ENCODE measurements at regions of chr20 and their contacts with region 1.

Region 1: GRCh38 chr20:54649511-54649962 is 174.1 kb downstream of the DOK5 start:
- DNase-seq: peak; percentile 92
- H3K4me3 ChIP-seq: no peak overlapping the region
- H3K27ac ChIP-seq: no peak overlapping the region
- H3K4me1 ChIP-seq: no peaks in the 10 kb centered on the region
- H3K27me3 ChIP-seq: no peaks in the 10 kb centered on the region
- CTCF ChIP-seq: peak in 2 of 3 experiments; percentile 69 to 86
- POLR2A ChIP-seq: no peak

Region 2: DNA sequence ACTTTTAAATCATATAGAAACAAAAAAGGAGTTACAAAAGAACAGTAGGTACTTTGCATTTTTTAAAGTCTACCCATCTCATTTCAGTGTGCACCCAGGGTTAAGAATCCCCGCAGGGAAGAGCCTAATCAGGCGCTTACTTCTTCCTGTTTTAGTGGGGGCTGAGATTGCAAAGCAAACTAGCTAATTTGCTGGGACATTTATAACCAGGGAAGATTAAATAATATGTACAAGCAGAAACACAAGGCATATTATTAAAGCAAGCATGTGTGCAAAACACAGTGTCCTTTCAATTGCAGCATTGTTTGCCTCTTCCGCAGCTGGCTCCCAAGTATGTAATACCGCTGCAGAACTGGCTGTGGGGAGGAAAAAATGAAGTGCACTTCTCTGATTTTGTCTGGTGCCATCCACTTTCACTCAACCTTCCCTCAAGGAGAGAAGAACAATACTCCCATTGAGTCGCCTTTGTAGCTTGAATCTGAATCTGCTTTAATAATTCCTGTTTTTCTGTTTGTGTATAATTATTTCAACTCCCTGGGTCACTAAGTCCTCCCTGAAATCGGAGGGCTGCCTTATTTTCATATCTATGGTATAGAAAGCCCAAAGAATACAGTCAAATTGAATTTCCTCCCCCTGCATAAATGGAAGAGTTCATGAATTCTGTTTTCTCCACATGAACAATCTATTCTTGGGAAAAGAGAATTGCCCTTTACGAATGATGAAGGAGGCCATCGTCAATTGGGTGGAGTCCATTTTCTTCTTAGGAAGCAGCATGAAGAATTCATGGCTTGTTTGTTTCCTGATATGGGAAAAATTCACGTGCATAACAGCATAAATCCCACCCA is 555.9 kb before region 1 on chr20:
- intact Hi-C with region 1: loop called (anchors 10 kb)
- DNase-seq: no peak
- H3K4me3 ChIP-seq: no peak overlapping the region
- H3K27ac ChIP-seq: no peak overlapping the region
- H3K4me1 ChIP-seq: no peaks in the 10 kb centered on the region
- H3K27me3 ChIP-seq: no peaks in the 10 kb centered on the region
- CTCF ChIP-seq: no peak
- POLR2A ChIP-seq: no peak

Region 3: GRCh38 chr20:54219751-54220426 is 429.6 kb before region 1 on chr20:
- intact Hi-C with region 1: loop called (anchors 10 kb)
- DNase-seq: no peak
- H3K4me3 ChIP-seq: no peak overlapping the region
- H3K27ac ChIP-seq: no peak overlapping the region
- H3K4me1 ChIP-seq: peaks cover 10% of the 10 kb centered on the region
- H3K27me3 ChIP-seq: no peaks in the 10 kb centered on the region
- CTCF ChIP-seq: peak in 1 of 3 experiments; percentile 45
- POLR2A ChIP-seq: no peak

Region 4: DNA sequence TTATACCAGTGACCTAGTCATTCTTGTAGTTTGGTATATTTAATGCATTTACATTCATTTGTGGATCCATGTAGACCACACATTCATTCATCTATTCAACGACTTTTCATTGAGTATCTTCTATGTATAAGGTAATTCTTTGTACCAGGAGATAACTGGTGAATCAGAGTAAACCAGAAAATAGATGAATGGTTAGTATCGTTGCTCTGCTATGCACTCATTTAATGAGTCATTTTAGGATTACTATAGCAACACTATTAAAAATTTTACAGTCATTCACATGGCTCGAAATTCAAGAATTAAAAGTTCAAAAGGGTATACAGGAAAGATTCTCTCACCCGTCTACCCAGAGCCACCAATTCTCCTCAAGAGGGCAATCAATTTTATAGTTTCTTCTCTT is 147.4 kb before region 1 on chr20:
- intact Hi-C with region 1: no loop called
- DNase-seq: no peak
- H3K4me3 ChIP-seq: no peak overlapping the region
- H3K27ac ChIP-seq: no peak overlapping the region
- H3K4me1 ChIP-seq: no peaks in the 10 kb centered on the region
- H3K27me3 ChIP-seq: no peaks in the 10 kb centered on the region
- CTCF ChIP-seq: no peak
- POLR2A ChIP-seq: no peak

Region 5: DNA sequence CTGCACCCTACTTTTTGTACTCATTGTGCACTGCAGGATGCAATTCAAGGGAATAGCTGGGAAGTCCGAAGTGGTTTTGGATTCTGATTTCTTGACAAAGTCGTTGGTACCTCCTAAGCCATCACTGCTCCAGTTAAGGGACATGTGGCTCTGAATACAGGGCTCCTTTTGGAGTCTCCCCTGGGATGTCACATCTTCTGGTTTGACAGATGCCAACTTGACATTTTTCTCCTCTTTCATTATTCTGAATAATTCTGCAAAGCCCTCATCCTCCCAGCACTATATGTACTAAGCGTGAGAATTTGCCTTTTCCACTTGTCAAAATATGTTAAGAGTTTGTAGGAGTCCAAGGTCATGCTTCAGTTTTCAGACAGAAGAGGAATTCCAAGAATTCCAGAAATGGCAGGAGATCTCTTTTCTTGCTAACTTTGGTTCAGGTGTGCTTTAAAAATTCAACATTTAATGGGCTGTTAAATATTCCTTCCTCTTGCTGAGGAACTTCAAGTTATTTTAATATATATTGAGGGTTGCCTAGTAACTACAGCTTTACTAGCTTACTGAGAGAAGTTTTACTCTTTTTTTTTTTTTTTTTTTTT is 135.4 kb before region 1 on chr20:
- intact Hi-C with region 1: no loop called
- DNase-seq: no peak
- H3K4me3 ChIP-seq: no peak overlapping the region
- H3K27ac ChIP-seq: no peak overlapping the region
- H3K4me1 ChIP-seq: no peaks in the 10 kb centered on the region
- H3K27me3 ChIP-seq: no peaks in the 10 kb centered on the region
- CTCF ChIP-seq: no peak
- POLR2A ChIP-seq: no peak

Region 6: GRCh38 chr20:54566031-54566885 is 83.3 kb before region 1 on chr20:
- intact Hi-C with region 1: no loop called
- DNase-seq: no peak
- H3K4me3 ChIP-seq: no peak overlapping the region
- H3K27ac ChIP-seq: no peak overlapping the region
- H3K4me1 ChIP-seq: no peaks in the 10 kb centered on the region
- H3K27me3 ChIP-seq: no peaks in the 10 kb centered on the region
- CTCF ChIP-seq: no peak
- POLR2A ChIP-seq: no peak

Region 7: GRCh38 chr20:54726768-54727422 is 77.4 kb after region 1 on chr20:
- intact Hi-C with region 1: no loop called
- DNase-seq: no peak
- H3K4me3 ChIP-seq: no peak overlapping the region
- H3K27ac ChIP-seq: no peak overlapping the region
- H3K4me1 ChIP-seq: no peaks in the 10 kb centered on the region
- H3K27me3 ChIP-seq: no peaks in the 10 kb centered on the region
- CTCF ChIP-seq: no peak
- POLR2A ChIP-seq: no peak